ENCODE measurements at regions of chr2 and their contacts with region 1.

Region 1: DNA sequence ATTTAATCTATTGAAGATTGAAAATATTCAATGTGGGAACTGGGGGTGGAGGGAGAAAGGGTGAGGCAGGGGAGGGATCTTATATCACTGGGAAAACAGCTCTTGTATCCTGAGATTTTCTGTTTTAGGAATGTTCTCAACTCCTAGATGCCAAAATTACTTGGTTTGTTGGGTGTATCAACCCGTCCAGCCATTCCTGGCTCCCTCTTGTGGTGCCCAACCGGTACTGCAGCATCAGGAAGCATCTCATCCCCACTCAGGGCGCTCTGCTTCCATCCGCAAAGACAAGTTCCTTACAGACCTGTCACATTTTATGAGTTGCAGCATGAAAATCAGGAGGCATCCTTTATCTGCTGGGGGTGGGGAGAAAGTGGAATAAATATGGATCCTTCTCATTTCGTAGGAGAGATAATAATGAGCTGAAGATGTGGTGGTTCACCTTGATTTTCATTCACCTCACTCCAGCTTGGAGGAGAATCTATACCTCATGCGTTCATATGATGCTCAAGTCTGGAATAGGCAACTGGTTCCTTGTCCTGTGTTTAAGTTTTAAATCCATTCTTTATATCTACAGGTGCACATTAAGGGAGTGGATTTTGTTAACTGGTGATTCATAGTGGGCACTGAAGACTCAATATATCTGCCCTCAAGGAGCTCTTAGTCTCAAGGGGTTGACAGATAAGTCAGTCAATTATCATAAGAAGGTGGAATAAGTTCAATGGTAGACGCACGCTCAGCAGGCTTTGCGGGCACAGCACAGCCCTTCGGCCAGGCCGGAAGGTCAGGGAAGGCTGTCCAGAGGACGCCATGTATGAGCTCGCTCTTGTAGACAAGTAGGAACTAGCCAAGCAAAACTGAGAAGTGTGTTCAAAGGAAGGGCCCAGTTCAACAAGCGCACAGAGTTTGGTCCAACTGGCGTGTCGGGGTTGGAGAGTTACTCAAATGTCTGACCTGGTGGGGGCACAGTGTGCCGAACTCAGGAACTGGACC is 127.3 kb downstream of the RNF144A start:
- DNase-seq: peak; percentile 88
- H3K4me3 ChIP-seq: no peak overlapping the region
- H3K27ac ChIP-seq: peak overlapping the region in 2 of 8 donors; percentile 9 to 15
- H3K4me1 ChIP-seq: peaks cover 0 to 16% (median 9%) of the 10 kb centered on the region in 6 donors
- H3K27me3 ChIP-seq: peaks cover 0 to 19% (median 0%) of the 10 kb centered on the region in 7 donors
- CTCF ChIP-seq: peak; percentile 80 to 97 (median 95)
- POLR2A ChIP-seq: no peak

Region 2: GRCh38 chr2:6896930-6897759 is 147.4 kb before region 1 on chr2:
- intact Hi-C with region 1: loop called (anchors 5 kb)
- DNase-seq: no peak
- H3K4me3 ChIP-seq: no peak overlapping the region
- H3K27ac ChIP-seq: no peak overlapping the region
- H3K4me1 ChIP-seq: peaks cover 0 to 9% (median 6%) of the 10 kb centered on the region in 6 donors
- H3K27me3 ChIP-seq: no peaks in the 10 kb centered on the region
- CTCF ChIP-seq: peak; percentile 55 to 88 (median 72)
- POLR2A ChIP-seq: no peak

Measured in spleen (tissue), 13 donors.